ENCODE measurements at regions of chr1 and their contacts with region 1.

Region 1: GRCh38 chr1:174883409-174883808 is 116.3 kb upstream of the CACYBP start:
- DNase-seq: peak in 3 of 5 donors; percentile 10 to 25 (median 12)
- H3K4me3 ChIP-seq: no peak overlapping the region
- H3K4me3 Mint-ChIP-seq: no peak overlapping the region
- H3K27ac ChIP-seq: no peak overlapping the region
- H3K27ac Mint-ChIP-seq: peak overlapping the region in 5 of 7 donors; percentile 0 to 87 (median 62)
- H3K4me1 ChIP-seq: peaks cover 6% of the 10 kb centered on the region
- H3K4me1 Mint-ChIP-seq: peaks cover 0 to 13% (median 8%) of the 10 kb centered on the region in 4 donors
- H3K27me3 ChIP-seq: no peaks in the 10 kb centered on the region
- H3K27me3 Mint-ChIP-seq: no peaks in the 10 kb centered on the region

Region 2: DNA sequence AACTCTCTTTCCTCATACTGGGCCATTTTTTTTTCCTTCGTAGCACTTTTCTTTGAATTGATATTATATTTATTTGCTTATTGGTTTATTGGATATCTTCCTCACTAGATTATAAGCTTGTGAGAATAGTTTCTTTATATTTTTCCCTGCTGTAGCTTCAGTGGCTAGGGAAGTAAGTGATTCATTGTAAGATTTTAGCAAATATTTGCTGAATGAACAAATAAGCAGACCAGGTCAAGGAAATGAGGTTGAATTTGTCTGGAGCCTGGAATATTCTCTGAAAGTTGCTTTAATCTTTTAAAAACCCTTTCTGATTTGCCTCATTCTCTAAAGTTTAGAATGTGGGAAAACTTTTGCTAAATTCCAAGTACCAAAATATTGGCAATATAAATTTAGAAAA is 643.9 kb before region 1 on chr1:
- CTCF ChIA-PET with region 1: no interaction called
- POLR2A ChIA-PET with region 1: no interaction called
- intact Hi-C with region 1: no loop called
- DNase-seq: no peak
- H3K4me3 ChIP-seq: no peak overlapping the region
- H3K4me3 Mint-ChIP-seq: no peak overlapping the region
- H3K27ac ChIP-seq: no peak overlapping the region
- H3K27ac Mint-ChIP-seq: peak overlapping the region in 2 of 7 donors; percentile 57 to 74
- H3K4me1 ChIP-seq: no peaks in the 10 kb centered on the region
- H3K4me1 Mint-ChIP-seq: peaks cover 3 to 5% (median 5%) of the 10 kb centered on the region in 4 donors
- H3K27me3 ChIP-seq: no peaks in the 10 kb centered on the region
- H3K27me3 Mint-ChIP-seq: no peaks in the 10 kb centered on the region

Region 3: DNA sequence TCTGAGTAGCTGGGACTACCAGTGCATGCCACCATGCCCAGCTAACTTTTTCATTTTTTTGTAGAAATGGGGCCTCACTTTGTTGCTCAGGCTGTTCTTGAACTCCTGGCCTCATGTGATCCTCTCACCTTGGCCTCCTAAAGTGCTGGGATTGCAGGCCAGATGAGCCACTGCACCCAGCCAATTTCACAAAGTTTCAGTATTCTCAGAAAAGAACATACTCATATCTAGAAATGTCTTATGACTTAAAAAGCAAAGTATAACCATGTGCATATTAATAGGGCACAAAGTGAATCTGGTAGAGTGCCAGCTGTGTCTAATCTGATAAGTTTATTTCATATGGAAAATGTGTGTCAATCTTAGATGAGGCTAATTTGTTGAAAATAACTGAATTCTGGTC is 28.9 kb after region 1 on chr1:
- CTCF ChIA-PET with region 1: no interaction called
- POLR2A ChIA-PET with region 1: no interaction called
- intact Hi-C with region 1: loop called (anchors 5 kb)
- DNase-seq: no peak
- H3K4me3 ChIP-seq: no peak overlapping the region
- H3K4me3 Mint-ChIP-seq: no peak overlapping the region
- H3K27ac ChIP-seq: no peak overlapping the region
- H3K27ac Mint-ChIP-seq: peak overlapping the region in 4 of 7 donors; percentile 46 to 75 (median 66)
- H3K4me1 ChIP-seq: peaks cover 20% of the 10 kb centered on the region
- H3K4me1 Mint-ChIP-seq: peaks cover 34 to 53% (median 40%) of the 10 kb centered on the region in 4 donors
- H3K27me3 ChIP-seq: no peaks in the 10 kb centered on the region
- H3K27me3 Mint-ChIP-seq: no peaks in the 10 kb centered on the region

Region 4: DNA sequence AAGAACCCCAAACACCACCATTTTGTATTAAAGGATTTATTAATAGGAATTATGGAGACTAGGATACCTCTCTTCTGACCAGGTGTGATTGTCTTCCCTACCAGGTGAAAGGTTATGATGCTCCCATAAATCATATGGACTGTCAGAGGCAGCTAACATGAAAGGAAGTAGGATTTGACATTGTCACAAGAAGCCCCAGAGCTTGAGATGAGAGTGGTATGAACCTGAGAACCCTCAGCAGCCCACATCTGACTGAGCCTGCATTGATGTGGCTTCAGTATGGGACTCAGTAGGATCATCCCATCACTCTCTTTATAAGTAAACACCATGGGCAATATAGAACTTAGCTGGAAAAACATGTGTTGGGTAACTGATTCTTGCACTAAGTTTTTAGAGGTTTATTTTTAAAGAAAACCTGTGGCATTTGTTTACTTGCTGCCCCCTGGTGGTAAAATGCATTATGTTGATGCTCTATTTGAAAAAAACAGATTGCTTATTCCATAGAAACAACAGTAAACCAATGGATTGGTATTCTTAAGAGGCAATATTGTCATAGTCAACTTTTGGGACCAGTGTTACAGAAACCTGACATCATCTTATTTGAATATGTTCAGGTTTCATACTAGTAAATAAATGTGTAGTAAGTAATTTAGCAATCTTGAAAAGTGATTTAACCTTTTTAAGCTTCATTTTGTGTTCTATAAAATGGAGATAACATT is 99.7 kb after region 1 on chr1:
- CTCF ChIA-PET with region 1: interaction called, 24 read pairs
- POLR2A ChIA-PET with region 1: interaction called, 3 read pairs
- intact Hi-C with region 1: loop called (anchors 1 kb)
- DNase-seq: peak; percentile 59 to 70 (median 62)
- H3K4me3 ChIP-seq: no peak overlapping the region
- H3K4me3 Mint-ChIP-seq: no peak overlapping the region
- H3K27ac ChIP-seq: no peak overlapping the region
- H3K27ac Mint-ChIP-seq: peak overlapping the region in 5 of 7 donors; percentile 44 to 75 (median 59)
- H3K4me1 ChIP-seq: peaks cover 4% of the 10 kb centered on the region
- H3K4me1 Mint-ChIP-seq: peaks cover 13 to 28% (median 21%) of the 10 kb centered on the region in 4 donors
- H3K27me3 ChIP-seq: no peaks in the 10 kb centered on the region
- H3K27me3 Mint-ChIP-seq: no peaks in the 10 kb centered on the region

Region 5: GRCh38 chr1:175129997-175130648 is 246.7 kb after region 1 on chr1:
- CTCF ChIA-PET with region 1: interaction called, 5 read pairs
- POLR2A ChIA-PET with region 1: no interaction called
- intact Hi-C with region 1: loop called (anchors 5 kb)
- DNase-seq: no peak
- H3K4me3 ChIP-seq: no peak overlapping the region
- H3K4me3 Mint-ChIP-seq: no peak overlapping the region
- H3K27ac ChIP-seq: no peak overlapping the region
- H3K27ac Mint-ChIP-seq: no peak overlapping the region
- H3K4me1 ChIP-seq: no peaks in the 10 kb centered on the region
- H3K4me1 Mint-ChIP-seq: peaks cover 0 to 1% (median 0%) of the 10 kb centered on the region in 4 donors
- H3K27me3 ChIP-seq: no peaks in the 10 kb centered on the region
- H3K27me3 Mint-ChIP-seq: peaks cover 3 to 9% of the 10 kb centered on the region in 2 donors